GM10248 (cell line): ENCODE measurements at regions of chr3 and their contacts with region 1.

Region 1: DNA sequence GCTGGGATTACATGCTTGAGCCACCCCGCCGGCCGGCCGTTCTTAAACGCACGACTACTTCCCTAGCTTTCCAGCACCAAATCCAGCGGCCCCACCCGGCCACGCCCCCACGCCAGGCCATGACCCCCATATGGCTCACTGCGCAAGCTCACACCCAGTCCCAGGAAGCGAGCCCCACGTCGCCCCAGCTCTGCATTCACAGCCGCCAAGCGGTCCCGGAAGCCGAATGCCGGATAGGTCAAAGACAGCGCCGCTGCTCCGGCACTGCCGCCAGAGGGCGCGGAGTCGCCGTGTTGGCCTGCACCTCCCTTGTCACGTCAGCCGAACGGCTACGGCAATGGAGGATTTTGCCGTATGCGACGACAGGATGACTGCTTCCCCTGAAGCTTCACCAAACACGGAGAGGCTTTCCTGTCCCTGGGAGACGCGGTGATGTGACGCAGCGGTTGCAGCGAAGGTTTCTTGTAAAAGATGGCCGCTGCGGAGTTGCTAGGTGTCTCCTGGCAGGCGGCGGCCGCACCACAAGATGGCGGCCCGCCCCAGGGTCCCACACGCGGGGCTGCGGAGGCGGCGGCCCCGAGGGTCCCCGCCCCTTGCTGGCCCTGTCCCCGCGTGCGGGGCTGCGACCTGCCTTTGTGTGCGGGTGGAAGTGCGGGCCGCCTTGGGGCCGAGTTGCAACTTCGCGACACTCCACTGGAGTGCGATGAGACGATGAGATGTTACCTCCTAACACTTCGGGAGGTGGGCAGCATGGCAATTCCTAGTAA is 30.2 kb upstream of the RPN1 start:
- DNase-seq: peak; percentile 97
- CTCF ChIP-seq: peak; percentile 99

Region 2: GRCh38 chr3:128650096-128651050 is 30.4 kb before region 1 on chr3 and contains the start of gene RPN1:
- CTCF ChIA-PET with region 1: interaction called, 15 read pairs
- POLR2A ChIA-PET with region 1: no interaction called
- DNase-seq: peak; percentile 94
- CTCF ChIP-seq: no peak

Region 3: DNA sequence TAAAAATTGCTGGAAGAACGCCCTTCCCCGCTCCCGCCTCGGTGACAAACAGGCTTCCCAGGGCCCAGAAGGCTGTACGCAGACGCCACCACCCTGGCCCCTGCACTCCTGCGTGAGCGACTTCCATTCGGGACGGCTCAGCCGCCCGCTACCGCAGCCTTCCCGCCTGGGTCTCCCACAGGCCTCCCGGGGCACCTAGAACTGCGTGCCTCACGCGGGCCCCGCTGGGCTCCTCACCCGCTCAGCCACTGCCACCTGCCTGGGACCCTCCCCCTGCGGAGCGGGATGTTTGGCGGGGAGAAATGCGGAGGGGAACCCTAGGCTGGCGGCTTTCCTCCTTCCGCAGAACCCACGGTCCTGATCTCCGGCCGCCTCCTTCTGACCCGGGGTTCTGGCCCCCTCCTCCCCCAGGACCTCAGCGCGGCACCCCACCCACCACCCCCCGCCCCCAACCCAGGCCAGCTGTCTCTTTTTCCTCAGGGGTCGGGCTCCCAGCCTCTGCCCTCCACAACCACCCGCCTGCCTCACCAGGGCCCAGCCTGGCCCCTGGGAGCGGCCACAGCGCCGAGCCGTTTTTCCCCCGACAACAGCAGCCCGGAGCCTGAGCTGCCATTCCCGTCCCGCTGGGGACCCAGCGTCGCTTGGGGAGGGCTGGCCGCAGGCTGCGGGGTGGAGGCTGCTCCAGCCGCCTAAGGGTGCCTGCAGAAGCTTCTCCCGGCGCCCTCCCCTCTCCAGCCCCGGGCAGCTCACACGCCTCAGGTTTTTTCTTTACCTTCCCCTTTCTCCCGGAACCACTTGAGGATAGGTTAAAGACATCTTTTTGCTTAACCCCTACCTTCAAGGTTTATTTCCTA is 17.7 kb after region 1 on chr3:
- CTCF ChIA-PET with region 1: interaction called, 18 read pairs
- POLR2A ChIA-PET with region 1: no interaction called
- DNase-seq: peak; percentile 39
- CTCF ChIP-seq: no peak

Region 4: GRCh38 chr3:128714887-128715491 is 34.2 kb after region 1 on chr3:
- CTCF ChIA-PET with region 1: interaction called, 13 read pairs
- POLR2A ChIA-PET with region 1: no interaction called
- DNase-seq: no peak
- CTCF ChIP-seq: no peak

Region 5: DNA sequence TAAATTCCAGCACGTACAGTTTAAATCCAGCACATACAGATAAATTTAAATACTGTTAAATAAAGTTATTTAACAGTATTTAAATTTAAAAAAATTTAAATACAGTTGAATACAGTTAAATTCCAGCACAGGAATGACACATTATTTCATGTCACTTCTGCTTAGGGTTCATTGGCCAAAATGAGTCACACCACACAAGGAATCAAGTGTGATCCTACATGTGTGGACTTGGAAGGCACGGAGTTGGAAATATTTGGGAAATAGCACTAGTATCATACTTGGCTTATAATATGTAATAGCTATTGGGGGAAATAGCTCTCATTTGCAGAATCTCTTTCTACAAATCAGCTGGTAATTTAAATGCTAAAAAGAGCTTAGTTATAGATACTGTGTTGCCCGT is 55.8 kb after region 1 on chr3:
- CTCF ChIA-PET with region 1: interaction called, 22 read pairs
- POLR2A ChIA-PET with region 1: no interaction called
- DNase-seq: no peak
- CTCF ChIP-seq: no peak

Region 6: DNA sequence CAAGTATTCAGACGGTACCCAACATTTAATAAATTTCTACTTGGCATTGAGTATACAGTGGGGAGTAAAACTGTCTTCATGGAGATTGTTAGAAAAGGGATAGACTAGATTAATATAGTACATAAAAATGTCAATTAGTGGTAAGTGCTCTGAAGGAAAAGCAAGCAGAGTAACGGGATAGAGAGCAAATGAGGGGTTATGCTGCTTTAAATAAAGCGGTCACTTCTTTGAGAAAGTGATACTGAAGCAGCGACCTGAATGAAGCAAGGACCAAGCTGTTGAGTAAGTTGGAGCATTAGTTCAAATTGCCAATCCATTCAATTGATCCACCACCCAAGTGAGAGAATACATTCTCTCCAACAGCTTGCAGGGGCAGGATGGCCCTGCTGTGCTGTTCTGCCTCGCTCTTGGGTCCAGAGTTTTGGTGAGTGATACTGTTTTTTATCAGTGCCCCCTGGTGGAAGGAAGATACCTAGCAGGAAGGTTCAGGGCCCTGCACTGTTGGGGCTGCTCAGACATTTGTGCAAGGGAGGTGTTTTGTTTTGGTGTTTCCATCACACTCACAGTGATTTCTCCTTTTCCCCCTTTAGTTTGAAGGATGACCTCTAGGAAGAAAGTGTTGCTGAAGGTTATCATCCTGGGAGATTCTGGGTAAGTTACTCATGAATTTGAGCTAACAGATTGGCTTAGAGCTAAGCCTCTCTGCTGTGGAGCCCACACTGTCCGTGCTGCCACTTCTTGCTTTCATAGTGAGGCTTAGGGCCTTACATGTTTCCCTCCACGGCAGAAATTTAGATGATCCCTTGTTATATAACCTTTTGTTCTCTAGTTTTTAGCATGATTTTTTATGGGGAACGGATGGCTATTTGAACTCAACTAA is 114.2 kb after region 1 on chr3:
- CTCF ChIA-PET with region 1: interaction called, 54 read pairs
- POLR2A ChIA-PET with region 1: interaction called, 6 read pairs
- DNase-seq: peak; percentile 79
- CTCF ChIP-seq: peak; percentile 74

Region 7: DNA sequence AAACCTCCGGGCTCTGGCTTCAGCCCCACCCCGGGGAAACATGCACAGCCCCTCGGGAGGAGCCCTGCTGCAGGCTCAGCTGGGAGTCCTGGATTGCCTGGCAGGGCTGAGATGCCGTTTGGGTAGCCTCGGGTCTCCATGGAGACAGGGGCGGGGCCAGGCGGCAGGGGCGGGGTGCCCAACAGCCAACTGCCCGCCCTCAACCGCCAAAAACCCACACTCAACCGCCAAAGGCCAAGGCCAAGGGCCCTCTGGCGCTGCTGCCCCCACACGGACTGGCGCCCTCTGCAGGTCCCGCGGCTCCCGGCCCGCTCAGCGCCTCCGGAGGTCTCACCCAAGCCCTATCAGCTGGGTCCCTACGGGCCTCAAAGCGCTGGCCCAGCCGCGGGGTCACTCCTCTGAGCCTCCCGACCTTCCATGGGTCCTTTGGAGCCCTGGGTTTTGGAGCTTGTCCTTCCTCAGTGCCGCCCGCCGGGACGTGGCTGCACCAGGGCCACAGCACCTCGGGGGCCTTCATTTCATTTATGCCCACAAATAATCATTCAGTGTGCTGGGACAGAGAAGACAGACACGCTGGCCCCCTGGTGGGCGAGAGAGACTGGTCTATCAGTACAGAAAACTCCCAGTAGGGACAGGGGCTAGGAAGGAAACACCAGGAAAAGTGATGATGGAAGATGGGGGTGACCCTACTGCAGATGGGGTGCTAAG is 165.1 kb after region 1 on chr3:
- CTCF ChIA-PET with region 1: interaction called, 37 read pairs
- POLR2A ChIA-PET with region 1: no interaction called
- DNase-seq: peak; percentile 92
- CTCF ChIP-seq: peak; percentile 64

Region 8: DNA sequence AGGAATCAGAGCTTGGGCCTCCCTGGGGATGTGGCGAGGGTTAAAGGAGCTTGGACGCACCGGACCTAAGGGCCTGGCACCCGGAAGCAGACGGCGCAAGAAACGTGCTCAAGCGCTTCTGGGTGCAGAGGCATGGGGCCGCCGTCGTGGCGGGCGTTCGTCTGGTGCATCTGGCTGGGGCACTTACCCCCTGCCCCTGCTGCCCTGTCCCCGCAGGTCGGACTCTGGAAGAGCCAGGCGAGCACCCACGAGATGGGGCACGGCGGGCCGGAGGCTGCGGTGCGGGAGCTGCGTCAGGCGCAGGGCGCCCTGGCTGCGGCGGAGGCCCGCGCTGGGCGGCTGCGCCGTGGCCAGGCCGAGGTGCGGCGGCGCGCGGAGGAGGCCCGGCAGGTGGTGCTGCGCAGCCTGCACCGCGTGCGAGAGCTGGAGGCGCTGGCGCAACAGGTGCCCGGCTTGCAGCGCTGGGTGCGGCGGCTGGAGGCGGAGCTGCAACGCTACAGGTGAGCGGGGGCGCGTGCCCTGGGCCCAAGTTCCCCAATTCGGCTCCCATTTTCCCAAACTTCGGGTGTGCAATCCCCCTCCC is 322.9 kb after region 1 on chr3:
- CTCF ChIA-PET with region 1: no interaction called
- POLR2A ChIA-PET with region 1: no interaction called
- DNase-seq: no peak
- CTCF ChIP-seq: no peak